Psoas muscle (tissue), 8 donors: ENCODE measurements at regions of chr19 and their contacts with region 1.

Region 1: DNA sequence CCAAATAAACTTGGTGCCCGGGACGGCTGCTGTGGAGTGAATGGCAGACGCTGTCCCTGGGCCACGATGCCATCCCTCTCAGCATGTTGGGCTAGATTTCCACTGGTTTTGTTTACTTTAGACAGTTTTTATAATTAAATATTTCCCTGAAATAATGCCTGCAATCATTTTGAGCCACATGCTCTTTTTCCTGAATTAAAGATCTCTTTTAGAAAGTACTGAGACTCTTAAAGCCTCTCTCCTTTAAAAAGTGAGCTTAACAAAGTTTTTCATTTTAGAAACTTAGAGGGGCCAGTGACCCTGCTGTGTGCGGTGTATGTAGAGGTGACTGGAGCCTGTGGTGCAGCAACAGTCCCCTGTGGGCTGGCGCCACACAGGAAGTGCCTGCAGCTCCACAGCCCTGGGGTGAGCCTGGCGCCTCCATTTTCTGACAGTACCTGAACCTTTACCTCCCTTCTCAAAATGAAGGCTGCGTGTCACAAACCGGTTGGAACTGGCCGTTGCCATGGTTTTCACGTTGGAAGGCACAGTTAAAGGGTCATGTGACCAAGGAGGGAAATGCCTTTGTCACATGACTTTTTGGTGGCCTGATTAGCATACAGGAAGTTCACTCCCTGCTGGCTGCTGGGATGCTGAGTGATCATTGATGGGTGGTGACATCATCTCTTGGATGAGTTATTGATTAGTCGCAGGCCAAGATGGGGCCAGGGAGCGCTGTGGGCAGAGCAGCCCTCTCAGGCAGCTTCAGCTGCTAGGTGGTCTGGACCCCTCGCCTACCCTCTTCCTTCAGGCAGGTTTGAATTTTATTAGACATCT is 26.3 kb downstream of the TSSK6 start:
- DNase-seq: peak; percentile 69 to 88
- ATAC-seq: peak; percentile 16 to 45 (median 32)
- H3K4me3 ChIP-seq: peak overlapping the region; percentile 30
- H3K27ac ChIP-seq: peak overlapping the region; percentile 67
- H3K4me1 ChIP-seq: peaks cover 39% of the 10 kb centered on the region
- H3K27me3 ChIP-seq: no peaks in the 10 kb centered on the region
- CTCF ChIP-seq: no peak

Region 2: DNA sequence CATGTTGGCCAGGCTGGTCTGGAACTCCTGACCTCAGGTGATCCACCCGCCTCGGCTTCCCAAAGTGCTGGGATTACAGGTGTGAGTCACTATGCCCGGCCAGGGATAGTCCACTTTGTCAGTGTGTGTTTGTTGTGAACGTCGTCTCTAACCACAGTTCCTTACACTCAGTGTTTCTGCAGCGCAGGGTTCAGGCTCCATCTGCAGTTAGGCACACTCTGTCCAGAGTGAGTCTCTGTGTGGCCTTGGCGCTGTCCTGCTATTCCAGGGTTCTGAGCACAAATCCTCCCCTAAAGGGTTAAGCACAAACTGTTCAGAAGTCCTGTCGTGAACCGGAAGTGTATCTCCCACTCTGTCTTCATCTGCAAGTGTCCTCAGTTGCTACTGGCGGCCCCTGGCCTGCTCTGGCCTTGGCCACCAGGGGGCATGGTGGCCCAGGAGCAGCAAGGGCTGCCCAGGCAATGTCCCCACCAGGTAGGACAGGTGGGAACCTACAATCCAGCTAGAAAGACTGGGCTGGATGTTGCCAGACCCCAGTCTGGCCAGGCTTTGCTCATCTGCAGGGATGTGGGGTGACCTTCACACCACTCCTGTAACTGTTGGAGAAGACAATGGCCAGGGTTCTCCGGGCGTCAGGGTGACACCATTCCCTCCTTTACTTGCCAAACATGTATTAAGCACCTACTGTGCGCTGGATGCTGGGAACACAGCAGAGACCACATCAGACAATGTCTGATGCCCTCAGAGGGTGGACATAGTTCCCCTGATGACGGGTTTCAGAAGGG is 122.3 kb before region 1 on chr19:
- intact Hi-C with region 1: loop called (anchors 1 to 2 kb)
- DNase-seq: peak; percentile 69 to 82
- ATAC-seq: peak; percentile 87 to 93 (median 90)
- H3K4me3 ChIP-seq: no peak overlapping the region
- H3K27ac ChIP-seq: no peak overlapping the region
- H3K4me1 ChIP-seq: peaks cover 6% of the 10 kb centered on the region
- H3K27me3 ChIP-seq: no peaks in the 10 kb centered on the region
- CTCF ChIP-seq: peak; percentile 95

Region 3: DNA sequence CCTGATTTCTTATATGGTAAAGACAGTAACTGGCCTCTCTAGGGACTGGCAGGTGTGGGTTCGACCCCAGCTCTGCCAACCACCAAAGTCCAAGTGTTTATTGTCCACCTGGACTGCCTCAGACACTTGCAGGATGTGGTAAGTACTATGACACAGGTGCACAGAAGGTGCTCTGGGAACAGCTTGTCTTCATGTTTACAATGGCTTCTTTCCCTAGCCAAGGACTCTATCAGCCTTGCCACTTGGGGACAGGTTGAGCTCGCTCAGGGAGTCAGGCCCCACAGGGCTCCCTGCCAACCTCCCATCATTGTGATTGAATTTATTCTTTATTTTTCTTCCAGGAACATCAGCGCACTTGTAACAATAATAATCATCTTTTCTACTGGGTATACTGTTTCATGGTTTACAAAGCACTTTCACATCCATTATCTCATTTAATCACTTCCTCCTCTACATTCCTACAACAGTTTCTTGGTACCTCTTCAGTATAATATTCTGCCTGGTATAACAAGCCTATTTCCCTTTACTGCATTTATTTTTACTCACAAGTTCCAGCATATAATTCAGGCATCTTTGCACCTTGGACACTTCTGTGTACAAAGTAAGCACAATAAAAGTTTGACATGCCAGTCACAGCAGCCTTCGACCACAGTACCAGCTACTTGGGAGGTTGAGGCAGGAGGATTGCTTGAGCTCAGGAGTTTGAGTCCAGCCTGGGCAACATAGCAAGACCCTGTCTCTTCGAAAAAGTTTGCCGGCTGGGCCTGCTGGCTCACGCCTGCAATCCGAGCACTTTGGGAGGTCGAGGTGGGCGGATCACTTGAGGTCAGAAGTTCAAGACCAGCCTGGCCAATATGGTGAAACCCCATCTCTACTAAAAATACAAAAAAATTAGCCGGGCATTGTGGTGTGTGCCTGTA is 107.8 kb before region 1 on chr19:
- intact Hi-C with region 1: loop called in 1 of 2 experiments (anchors 5 kb)
- DNase-seq: no peak
- ATAC-seq: no peak
- H3K4me3 ChIP-seq: no peak overlapping the region
- H3K27ac ChIP-seq: no peak overlapping the region
- H3K4me1 ChIP-seq: peaks cover 15% of the 10 kb centered on the region
- H3K27me3 ChIP-seq: no peaks in the 10 kb centered on the region
- CTCF ChIP-seq: no peak

Region 4: DNA sequence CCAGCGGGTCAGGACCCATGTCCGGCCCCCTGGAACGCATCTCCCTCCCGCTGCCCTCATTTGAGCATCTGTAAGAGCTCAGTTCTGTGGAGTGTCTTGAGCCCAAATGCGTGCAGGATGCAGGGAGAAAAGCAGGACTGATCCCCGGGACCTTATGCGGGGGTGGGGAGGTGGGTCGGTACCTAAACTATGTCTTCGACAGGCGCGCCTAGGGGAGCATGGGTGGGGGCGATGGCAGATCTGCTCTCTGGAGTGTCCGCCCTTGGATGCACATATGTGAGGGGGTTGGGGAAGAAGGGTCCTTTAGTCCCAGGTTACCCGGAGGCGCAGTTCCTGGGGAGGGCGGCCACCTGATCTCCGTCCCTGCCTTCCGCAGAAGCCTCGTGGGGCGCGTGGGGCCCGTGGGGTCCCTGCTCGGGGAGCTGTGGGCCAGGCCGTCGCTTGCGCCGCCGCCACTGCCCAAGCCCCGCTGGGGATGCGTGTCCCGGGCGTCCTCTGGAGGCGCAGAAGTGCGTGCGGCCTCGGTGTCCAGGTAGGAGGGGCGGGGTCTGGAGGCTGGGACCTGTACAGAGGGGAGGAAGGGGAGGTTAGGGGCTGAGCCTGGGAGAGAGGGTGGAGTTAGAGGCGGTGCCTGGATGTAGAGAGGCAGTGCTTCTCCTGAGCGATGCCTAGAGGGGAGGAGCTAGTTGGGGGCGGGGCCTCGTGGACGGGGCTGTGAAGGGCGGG is 51.8 kb after region 1 on chr19:
- intact Hi-C with region 1: no loop called
- DNase-seq: peak in 1 of 2 donors; percentile 48
- ATAC-seq: peak in 3 of 4 donors; percentile 34 to 47 (median 38)
- H3K4me3 ChIP-seq: peak overlapping the region; percentile 28
- H3K27ac ChIP-seq: no peak overlapping the region
- H3K4me1 ChIP-seq: peaks cover 12% of the 10 kb centered on the region
- H3K27me3 ChIP-seq: peaks cover 0 to 69% (median 44%) of the 10 kb centered on the region in 3 donors
- CTCF ChIP-seq: no peak